PC-3 (cell line): ENCODE measurements at regions of chr12 and their contacts with region 1.

Region 1: DNA sequence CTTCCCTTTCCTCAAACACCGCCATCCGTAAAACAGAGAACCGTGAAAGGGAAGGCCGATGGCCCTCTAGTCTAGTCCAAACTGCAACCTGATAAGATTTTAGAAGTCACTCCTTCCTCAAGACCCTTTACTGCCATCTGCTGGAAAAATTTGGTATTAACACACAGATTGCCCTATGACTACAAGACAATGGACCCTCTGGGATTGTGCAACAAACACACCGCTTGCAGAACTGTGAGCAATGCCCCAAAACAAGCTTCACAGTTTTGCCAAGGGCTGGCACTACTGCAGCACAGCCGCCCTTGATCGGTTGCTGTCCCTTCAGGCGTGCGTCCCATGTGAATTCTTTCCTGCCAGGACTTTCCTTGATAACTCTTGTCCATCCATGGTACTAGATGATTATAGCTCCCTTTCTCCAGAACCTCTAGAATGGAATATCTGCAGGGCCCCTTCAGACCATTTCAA is 23.1 kb downstream of the LLPH start:
- DNase-seq: peak; percentile 100
- ATAC-seq: peak; percentile 99
- H3K4me3 ChIP-seq: peak overlapping the region; percentile 10; the same call in 1 of the 2 replicates
- H3K27ac ChIP-seq: no peak overlapping the region
- H3K4me1 ChIP-seq: peaks cover 4% of the 10 kb centered on the region; the same call in 1 of the 2 replicates
- H3K27me3 ChIP-seq: no peaks in the 10 kb centered on the region
- CTCF ChIP-seq: peak; percentile 83

Region 2: DNA sequence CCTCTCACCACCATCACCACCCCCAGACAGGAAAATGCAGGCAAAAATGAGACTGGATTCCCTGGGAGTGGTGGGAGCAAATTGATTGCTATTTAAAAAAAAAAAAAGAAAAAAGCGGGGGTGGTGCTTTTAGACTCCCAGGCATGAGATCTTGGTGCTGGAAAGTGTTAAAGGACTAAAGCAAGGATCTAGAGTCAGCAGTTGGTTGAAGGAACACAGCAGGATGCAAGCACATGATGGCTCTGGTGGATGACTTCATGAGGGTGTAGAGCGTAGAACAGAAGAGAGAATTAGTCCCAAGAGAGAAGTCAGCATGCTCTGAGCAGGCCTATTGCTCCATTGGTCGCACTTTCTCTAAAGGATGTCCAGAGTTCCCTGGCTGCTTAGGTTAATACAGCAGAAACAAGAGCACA is 467.0 kb before region 1 on chr12:
- CTCF ChIA-PET with region 1: interaction called, 21 read pairs
- POLR2A ChIA-PET with region 1: no interaction called
- intact Hi-C with region 1: no loop called
- DNase-seq: no peak
- ATAC-seq: no peak
- H3K4me3 ChIP-seq: no peak overlapping the region
- H3K27ac ChIP-seq: no peak overlapping the region
- H3K4me1 ChIP-seq: peaks cover 59% of the 10 kb centered on the region
- H3K27me3 ChIP-seq: no peaks in the 10 kb centered on the region
- CTCF ChIP-seq: no peak

Region 3: GRCh38 chr12:66065641-66066136 is 41.8 kb before region 1 on chr12:
- CTCF ChIA-PET with region 1: no interaction called
- POLR2A ChIA-PET with region 1: no interaction called
- intact Hi-C with region 1: no loop called
- DNase-seq: no peak
- ATAC-seq: no peak
- H3K4me3 ChIP-seq: no peak overlapping the region
- H3K27ac ChIP-seq: no peak overlapping the region
- H3K4me1 ChIP-seq: no peaks in the 10 kb centered on the region
- H3K27me3 ChIP-seq: 0 out of 2 replicates have a peak, but pooled peaks cover 9% of the 10 kb centered on the region
- CTCF ChIP-seq: no peak

Region 4: GRCh38 chr12:66301944-66302826 is 194.7 kb after region 1 on chr12 and contains the start of gene HELB:
- CTCF ChIA-PET with region 1: no interaction called
- POLR2A ChIA-PET with region 1: no interaction called
- intact Hi-C with region 1: no loop called
- DNase-seq: peak; percentile 98
- ATAC-seq: peak; percentile 92
- H3K4me3 ChIP-seq: peak within 1 kb of the TSS; percentile 98
- H3K27ac ChIP-seq: peak within 1 kb of the TSS; percentile 57
- H3K4me1 ChIP-seq: peaks cover 17% of the 10 kb centered on the region
- H3K27me3 ChIP-seq: no peaks in the 10 kb centered on the region
- CTCF ChIP-seq: no peak
- total RNA-seq, gene HELB: 2.1 and 2.7 TPM in 2 replicates